CD4-positive, alpha-beta memory T cell (primary cell): ENCODE measurements at regions of chr12 and their contacts with region 1.

Region 1: GRCh38 chr12:54588110-54588889 is at the start of gene PPP1R1A:
- DNase-seq: no peak
- H3K4me3 ChIP-seq: no peak within 1 kb of the TSS
- H3K4me3 Mint-ChIP-seq: peak within 1 kb of the TSS; percentile 32 to 82 (median 60)
- H3K27ac ChIP-seq: no peak within 1 kb of the TSS
- H3K27ac Mint-ChIP-seq: peak within 1 kb of the TSS in 1 of 7 donors; percentile 49
- H3K4me1 ChIP-seq: peaks cover 6% of the 10 kb centered on the region
- H3K4me1 Mint-ChIP-seq: peaks cover 6 to 9% (median 7%) of the 10 kb centered on the region in 4 donors
- H3K27me3 ChIP-seq: peaks cover 24% of the 10 kb centered on the region
- H3K27me3 Mint-ChIP-seq: peaks cover 42 to 67% of the 10 kb centered on the region in 2 donors
- total RNA-seq, gene PPP1R1A: not detected

Region 2: DNA sequence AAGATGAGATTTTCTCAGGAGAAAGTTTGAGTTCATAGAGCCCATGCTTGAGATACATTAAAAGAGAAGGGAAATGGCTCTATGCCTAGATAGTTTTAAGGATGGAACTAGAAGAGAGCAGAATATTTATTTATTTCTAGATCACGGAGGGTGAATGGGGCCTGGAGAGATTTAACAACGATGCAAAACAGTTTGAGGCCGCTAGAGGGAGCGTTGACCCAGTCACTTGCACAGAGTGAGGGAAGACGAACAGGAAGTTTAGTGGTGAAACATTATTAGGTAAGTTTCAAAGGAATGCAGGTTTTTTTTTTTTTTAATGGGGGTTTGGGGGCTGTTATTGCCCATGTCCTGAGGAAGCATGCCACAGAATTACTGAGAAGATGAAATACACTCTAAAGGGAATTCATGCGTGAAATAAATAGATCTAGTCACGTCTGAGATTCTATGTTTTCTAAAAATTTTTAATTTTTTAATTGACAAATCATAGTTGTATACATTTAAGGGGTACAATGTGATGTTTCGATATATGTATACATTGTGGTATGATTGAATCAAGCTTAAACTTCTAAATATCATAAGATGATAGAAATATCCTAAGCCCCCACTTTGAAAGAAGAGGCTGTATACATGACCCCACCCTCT is 15.0 kb after region 1 on chr12:
- CTCF ChIA-PET with region 1: interaction called, 64 read pairs
- POLR2A ChIA-PET with region 1: no interaction called
- intact Hi-C with region 1: no loop called
- DNase-seq: peak; percentile 54 to 70 (median 60)
- H3K4me3 ChIP-seq: no peak overlapping the region
- H3K4me3 Mint-ChIP-seq: no peak overlapping the region
- H3K27ac ChIP-seq: no peak overlapping the region
- H3K27ac Mint-ChIP-seq: peak overlapping the region in 2 of 7 donors; percentile 15 to 17
- H3K4me1 ChIP-seq: no peaks in the 10 kb centered on the region
- H3K4me1 Mint-ChIP-seq: peaks cover 0 to 7% (median 6%) of the 10 kb centered on the region in 4 donors
- H3K27me3 ChIP-seq: no peaks in the 10 kb centered on the region
- H3K27me3 Mint-ChIP-seq: peaks cover 5 to 17% of the 10 kb centered on the region in 2 donors